ENCODE measurements at regions of chr1 and their contacts with region 1.

Region 1: GRCh38 chr1:85344256-85344694 is 67.8 kb upstream of the BCL10 start:
- DNase-seq: peak; percentile 62 to 65
- ATAC-seq: peak; percentile 94 to 99
- H3K4me3 ChIP-seq: no peak overlapping the region
- H3K27ac ChIP-seq: peak overlapping the region; percentile 34 to 69; a peak in 3 of 6 replicates
- H3K4me1 ChIP-seq: peaks cover 22% of the 10 kb centered on the region
- CTCF ChIP-seq: peak; percentile 81
- EP300 ChIP-seq: no peak
- POLR2A ChIP-seq: no peak
- RAD21 ChIP-seq: peak; percentile 78 to 79

Region 2: GRCh38 chr1:85330711-85331290 is 13.5 kb before region 1 on chr1:
- CTCF ChIA-PET with region 1: interaction called, 21 read pairs
- POLR2A ChIA-PET with region 1: no interaction called
- DNase-seq: no peak
- ATAC-seq: no peak
- H3K4me3 ChIP-seq: no peak overlapping the region
- H3K27ac ChIP-seq: peak overlapping the region; percentile 69 to 84
- H3K4me1 ChIP-seq: peaks cover 53% of the 10 kb centered on the region
- CTCF ChIP-seq: no peak
- EP300 ChIP-seq: no peak
- POLR2A ChIP-seq: no peak
- RAD21 ChIP-seq: no peak

Region 3: GRCh38 chr1:85368073-85368770 is 23.9 kb after region 1 on chr1:
- CTCF ChIA-PET with region 1: no interaction called
- POLR2A ChIA-PET with region 1: no interaction called
- DNase-seq: no peak
- ATAC-seq: no peak
- H3K4me3 ChIP-seq: no peak overlapping the region
- H3K27ac ChIP-seq: no peak overlapping the region
- H3K4me1 ChIP-seq: peaks cover 35% of the 10 kb centered on the region
- CTCF ChIP-seq: no peak
- EP300 ChIP-seq: no peak
- POLR2A ChIP-seq: no peak
- RAD21 ChIP-seq: no peak

Region 4: DNA sequence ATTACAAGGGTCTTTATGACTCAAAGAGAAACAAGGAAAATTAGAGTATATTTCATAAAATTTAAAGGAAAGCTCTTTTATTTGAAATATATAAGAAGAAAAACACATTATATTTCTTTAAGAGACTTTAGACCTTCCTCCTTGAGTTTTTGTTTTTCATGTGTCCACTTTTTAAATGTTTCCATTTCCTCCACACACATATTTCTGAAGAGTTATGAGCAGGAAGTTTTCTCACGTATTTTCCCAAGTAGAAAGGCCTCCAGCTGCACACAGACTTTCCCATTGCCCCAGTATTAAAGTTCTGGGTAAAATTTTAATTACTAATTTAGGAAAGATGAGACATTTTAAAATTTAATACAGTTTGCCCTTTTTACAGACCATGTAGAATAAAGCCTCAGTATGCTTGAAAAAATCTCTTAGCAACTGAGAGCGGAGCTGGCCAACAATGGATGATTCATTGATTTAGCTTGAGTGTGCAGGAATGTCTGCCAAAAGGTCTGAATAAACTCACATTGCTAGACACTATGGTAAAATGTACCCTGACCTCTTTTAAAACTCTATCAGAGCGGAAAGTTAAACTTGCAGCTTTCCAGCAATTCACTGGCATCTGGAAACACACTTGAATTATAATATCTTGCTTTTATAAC is 62.7 kb after region 1 on chr1:
- CTCF ChIA-PET with region 1: interaction called, 11 read pairs
- POLR2A ChIA-PET with region 1: no interaction called
- DNase-seq: peak; percentile 50 to 68
- ATAC-seq: peak; percentile 68 to 94; a peak in 5 of 6 replicates
- H3K4me3 ChIP-seq: peak overlapping the region; percentile 23
- H3K27ac ChIP-seq: peak overlapping the region; percentile 82 to 85
- H3K4me1 ChIP-seq: peaks cover 22% of the 10 kb centered on the region
- CTCF ChIP-seq: no peak
- EP300 ChIP-seq: no peak
- POLR2A ChIP-seq: no peak
- RAD21 ChIP-seq: no peak